A673 (cell line): ENCODE measurements at regions of chr4 and their contacts with region 1.

Region 1: DNA sequence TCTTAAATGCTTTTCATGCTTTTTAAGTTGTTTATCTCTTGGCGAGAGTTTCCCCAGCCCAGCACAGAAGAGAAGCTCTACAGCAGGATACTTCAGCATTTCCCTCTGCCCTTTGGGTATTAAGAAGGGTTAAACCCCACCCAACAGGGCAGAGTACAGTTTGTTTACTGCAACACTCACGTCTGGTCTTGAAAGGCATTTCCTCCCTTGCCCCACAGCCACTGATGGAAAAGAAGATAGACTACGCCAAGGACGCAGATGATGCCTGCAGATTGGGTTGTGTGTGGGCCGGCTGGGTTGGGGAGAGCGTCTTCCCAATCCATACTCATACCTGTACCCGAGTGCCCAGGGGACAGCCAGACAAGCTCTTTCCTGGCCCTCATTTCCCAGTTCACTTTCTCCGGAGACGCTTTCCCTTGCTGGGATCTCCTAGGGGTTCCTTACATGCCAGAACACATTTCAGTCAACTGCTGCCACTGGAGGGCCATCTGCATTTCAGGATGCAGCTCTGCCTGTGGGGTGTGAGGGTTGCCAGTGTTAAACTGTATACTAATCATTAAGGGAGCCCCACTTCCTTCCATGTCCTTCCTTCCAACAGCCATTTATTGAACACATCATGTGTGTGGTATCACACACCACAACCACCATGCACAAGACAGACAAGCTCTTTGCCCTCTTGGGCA is 96.6 kb upstream of the DHX15 start:
- DNase-seq: no peak
- H3K4me3 ChIP-seq: no peak overlapping the region
- H3K27ac ChIP-seq: no peak overlapping the region
- H3K4me1 ChIP-seq: no peaks in the 10 kb centered on the region
- H3K27me3 ChIP-seq: peaks cover 11% of the 10 kb centered on the region
- CTCF ChIP-seq: no peak

Region 2: DNA sequence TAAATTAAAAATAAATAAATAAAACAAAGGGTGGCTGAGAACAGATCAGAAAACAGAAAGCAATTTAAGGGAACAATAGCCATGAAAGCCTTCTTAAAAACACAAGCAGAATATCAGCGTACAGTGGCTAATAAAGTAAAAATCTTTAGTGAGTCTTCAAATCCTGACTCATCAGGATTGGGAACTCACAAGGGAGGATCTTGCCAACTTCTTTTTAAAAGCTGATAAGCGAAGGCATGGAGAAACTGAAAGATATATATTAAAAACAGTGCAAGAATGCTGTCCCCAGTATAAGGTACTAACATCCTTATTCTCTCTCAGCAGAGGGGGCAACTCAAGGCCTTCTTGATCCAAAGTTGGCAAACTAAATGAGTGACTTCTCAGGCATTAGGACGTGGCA is 276.6 kb before region 1 on chr4:
- CTCF ChIA-PET with region 1: no interaction called
- POLR2A ChIA-PET with region 1: no interaction called
- intact Hi-C with region 1: no loop called
- DNase-seq: no peak
- H3K4me3 ChIP-seq: no peak overlapping the region
- H3K27ac ChIP-seq: no peak overlapping the region
- H3K4me1 ChIP-seq: no peaks in the 10 kb centered on the region
- H3K27me3 ChIP-seq: no peaks in the 10 kb centered on the region
- CTCF ChIP-seq: no peak

Region 3: GRCh38 chr4:24748758-24749350 is 67.9 kb after region 1 on chr4:
- CTCF ChIA-PET with region 1: no interaction called
- POLR2A ChIA-PET with region 1: interaction called, 12 read pairs
- intact Hi-C with region 1: no loop called
- DNase-seq: no peak
- H3K4me3 ChIP-seq: no peak overlapping the region
- H3K27ac ChIP-seq: no peak overlapping the region
- H3K4me1 ChIP-seq: no peaks in the 10 kb centered on the region
- H3K27me3 ChIP-seq: no peaks in the 10 kb centered on the region
- CTCF ChIP-seq: no peak

Region 4: GRCh38 chr4:25234390-25235370 is 553.8 kb after region 1 on chr4:
- CTCF ChIA-PET with region 1: no interaction called
- POLR2A ChIA-PET with region 1: no interaction called
- intact Hi-C with region 1: no loop called
- DNase-seq: peak; percentile 77
- H3K4me3 ChIP-seq: peak overlapping the region; percentile 60
- H3K27ac ChIP-seq: peak overlapping the region; percentile 74
- H3K4me1 ChIP-seq: peaks cover 11% of the 10 kb centered on the region
- H3K27me3 ChIP-seq: no peaks in the 10 kb centered on the region
- CTCF ChIP-seq: peak; percentile 36; the same call in 1 of the 2 replicates